Activated CD4-positive, alpha-beta memory T cell treated with anti-CD3 and anti-CD28 coated beads, Interleukin-2, amount 10 ng/mL, durations not matched to agents 7 days and 5 days (primary cell): ENCODE measurements at regions of chr17 and their contacts with region 1.

Region 1: DNA sequence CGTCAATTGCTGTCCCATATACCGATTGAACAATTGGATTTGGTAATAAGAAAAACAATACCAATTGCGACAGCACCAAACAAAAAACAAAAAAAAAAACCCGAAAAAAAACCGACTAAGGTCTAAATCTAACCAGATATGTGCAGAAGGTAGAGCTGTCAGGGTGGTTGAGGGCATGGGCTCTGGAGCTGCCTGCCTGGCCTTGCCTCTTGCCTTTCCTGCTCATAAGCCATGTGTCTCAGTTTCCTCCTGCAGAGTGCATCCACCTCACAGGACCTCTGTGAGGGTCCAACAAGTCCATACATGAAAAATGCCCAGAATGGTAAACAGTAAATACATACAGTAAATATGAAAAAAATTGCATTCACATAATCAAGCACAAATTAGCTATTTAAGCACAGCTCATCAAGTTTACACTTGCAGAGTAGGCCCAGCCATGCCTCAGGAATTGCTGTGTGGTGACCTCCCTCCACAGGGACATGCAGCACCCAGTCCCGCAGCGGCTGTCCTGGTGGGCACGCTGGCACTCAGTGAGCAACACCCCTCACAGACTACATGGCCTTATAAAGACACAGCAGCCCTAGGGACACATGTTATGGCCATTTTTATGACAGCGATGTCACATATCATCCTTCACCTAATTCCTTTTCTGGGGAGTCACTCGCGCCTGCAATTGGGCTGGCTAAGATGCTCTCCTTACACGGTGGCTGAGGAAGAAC is 17.9 kb downstream of the TBC1D28 start:
- DNase-seq: no peak
- H3K4me3 Mint-ChIP-seq: peak overlapping the region; percentile 45
- H3K27ac Mint-ChIP-seq: peak overlapping the region; percentile 9
- H3K4me1 Mint-ChIP-seq: peaks cover 10% of the 10 kb centered on the region
- H3K27me3 Mint-ChIP-seq: peaks cover 5% of the 10 kb centered on the region

Region 2: GRCh38 chr17:18198530-18198929 is 427.8 kb before region 1 on chr17:
- CTCF ChIA-PET with region 1: no interaction called
- POLR2A ChIA-PET with region 1: no interaction called
- DNase-seq: no peak
- H3K4me3 Mint-ChIP-seq: no peak overlapping the region
- H3K27ac Mint-ChIP-seq: no peak overlapping the region
- H3K4me1 Mint-ChIP-seq: peaks cover 17% of the 10 kb centered on the region
- H3K27me3 Mint-ChIP-seq: no peaks in the 10 kb centered on the region

Region 3: GRCh38 chr17:18344021-18344420 is 282.3 kb before region 1 on chr17:
- CTCF ChIA-PET with region 1: no interaction called
- POLR2A ChIA-PET with region 1: no interaction called
- DNase-seq: no peak
- H3K4me3 Mint-ChIP-seq: no peak overlapping the region
- H3K27ac Mint-ChIP-seq: peak overlapping the region; percentile 62
- H3K4me1 Mint-ChIP-seq: peaks cover 12% of the 10 kb centered on the region
- H3K27me3 Mint-ChIP-seq: no peaks in the 10 kb centered on the region

Region 4: GRCh38 chr17:18954321-18954720 is 328.0 kb after region 1 on chr17:
- CTCF ChIA-PET with region 1: interaction called, 13 read pairs
- POLR2A ChIA-PET with region 1: no interaction called
- DNase-seq: no peak
- H3K4me3 Mint-ChIP-seq: no peak overlapping the region
- H3K27ac Mint-ChIP-seq: no peak overlapping the region
- H3K4me1 Mint-ChIP-seq: peaks cover 15% of the 10 kb centered on the region
- H3K27me3 Mint-ChIP-seq: peaks cover 17% of the 10 kb centered on the region